ENCODE measurements at regions of chr18 and their contacts with region 1.

Region 1: DNA sequence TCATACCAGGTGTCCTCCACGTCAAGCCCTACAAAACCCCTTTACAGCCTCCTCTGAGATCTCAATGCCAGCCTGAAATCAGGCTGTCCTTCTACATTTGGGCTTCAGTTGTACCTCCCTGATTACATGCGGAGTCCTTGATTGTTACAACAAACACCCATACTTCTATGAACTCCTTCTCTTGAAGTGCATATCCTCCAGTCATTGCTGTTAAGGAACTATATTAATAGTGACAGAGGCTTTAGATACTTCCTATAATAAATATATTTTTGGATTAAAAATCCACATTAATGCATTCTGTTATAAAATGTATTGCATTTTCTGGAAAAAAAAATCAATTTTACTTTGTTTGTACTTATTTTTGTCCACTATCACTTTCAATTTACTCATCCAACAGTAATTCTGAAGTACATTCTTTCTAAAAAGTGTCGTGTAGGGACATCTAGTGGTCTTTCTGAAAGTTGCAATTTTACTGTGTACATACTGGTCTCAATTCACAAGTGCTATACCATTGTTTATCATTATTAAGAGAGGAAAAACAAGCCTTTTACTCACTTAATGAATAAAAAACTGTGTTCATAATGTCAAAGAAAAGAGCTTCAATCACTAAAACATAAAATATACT is 316.4 kb downstream of the DSEL start:
- DNase-seq: no peak
- ATAC-seq: peak; percentile 60
- H3K4me3 Mint-ChIP-seq: no peak overlapping the region
- H3K27ac Mint-ChIP-seq: no peak overlapping the region
- H3K4me1 Mint-ChIP-seq: no peaks in the 10 kb centered on the region
- H3K27me3 Mint-ChIP-seq: peaks cover 7% of the 10 kb centered on the region

Region 2: GRCh38 chr18:66676699-66677098 is 523.4 kb before region 1 on chr18:
- CTCF ChIA-PET with region 1: no interaction called
- POLR2A ChIA-PET with region 1: no interaction called
- intact Hi-C with region 1: no loop called
- DNase-seq: no peak
- ATAC-seq: no peak
- H3K4me3 Mint-ChIP-seq: no peak overlapping the region
- H3K27ac Mint-ChIP-seq: no peak overlapping the region
- H3K4me1 Mint-ChIP-seq: no peaks in the 10 kb centered on the region
- H3K27me3 Mint-ChIP-seq: no peaks in the 10 kb centered on the region

Region 3: DNA sequence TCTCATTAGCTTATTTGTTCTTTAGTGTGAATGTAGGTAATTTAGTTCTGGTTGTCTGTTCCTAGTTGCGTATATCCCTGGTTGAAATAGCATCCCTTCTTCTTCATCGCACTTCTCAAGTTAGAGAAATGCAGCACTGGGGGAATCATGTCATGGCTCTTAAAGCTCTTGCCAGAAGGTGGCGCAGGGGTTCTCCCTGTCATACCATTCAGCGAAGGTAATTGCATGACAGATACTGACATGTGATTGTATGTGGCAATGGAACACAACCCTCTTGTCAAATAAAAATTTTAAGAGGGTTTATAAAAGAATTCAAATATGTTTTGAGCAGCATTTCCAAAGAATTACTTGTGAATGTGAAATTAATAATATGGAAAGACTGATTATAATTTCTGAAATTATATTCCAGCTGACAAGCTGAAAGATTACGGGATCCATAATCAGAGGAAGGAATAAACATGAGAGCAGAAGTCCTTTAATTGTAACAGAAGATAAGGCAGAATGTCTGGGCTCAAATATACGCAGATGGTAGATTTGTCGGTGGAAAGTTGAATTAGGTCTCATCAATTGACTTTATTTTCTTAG is 95.3 kb before region 1 on chr18:
- CTCF ChIA-PET with region 1: interaction called, 23 read pairs
- POLR2A ChIA-PET with region 1: no interaction called
- intact Hi-C with region 1: loop called (anchors 1 kb)
- DNase-seq: peak; percentile 69
- ATAC-seq: peak; percentile 74
- H3K4me3 Mint-ChIP-seq: no peak overlapping the region
- H3K27ac Mint-ChIP-seq: no peak overlapping the region
- H3K4me1 Mint-ChIP-seq: no peaks in the 10 kb centered on the region
- H3K27me3 Mint-ChIP-seq: no peaks in the 10 kb centered on the region

Measured in activated CD4-positive, alpha-beta T cell treated with anti-CD3 and anti-CD28 coated beads for 36 hours (primary cell).